CD4-positive, alpha-beta T cell (primary cell): ENCODE measurements at regions of chr14 and their contacts with region 1.

Region 1: GRCh38 chr14:100078991-100079725 is 13.9 kb downstream of the EVL start:
- DNase-seq: peak; percentile 73 to 94 (median 83)
- ATAC-seq: peak; percentile 69
- H3K4me3 ChIP-seq: peak overlapping the region; percentile 29
- H3K4me3 Mint-ChIP-seq: peak overlapping the region; percentile 88
- H3K27ac ChIP-seq: peak overlapping the region; percentile 53 to 96
- H3K27ac Mint-ChIP-seq: peak overlapping the region; percentile 98
- H3K4me1 ChIP-seq: peaks cover 95% of the 10 kb centered on the region
- H3K4me1 Mint-ChIP-seq: peaks cover 98% of the 10 kb centered on the region
- H3K27me3 ChIP-seq: no peaks in the 10 kb centered on the region
- H3K27me3 Mint-ChIP-seq: no peaks in the 10 kb centered on the region
- CTCF ChIP-seq: peak; percentile 28

Region 2: GRCh38 chr14:99009871-99010270 is 1069.3 kb before region 1 on chr14:
- CTCF ChIA-PET with region 1: no interaction called
- POLR2A ChIA-PET with region 1: no interaction called
- intact Hi-C with region 1: no loop called
- DNase-seq: peak in 10 of 14 experiments; percentile 2 to 43 (median 15)
- ATAC-seq: peak; percentile 90
- H3K4me3 ChIP-seq: no peak overlapping the region
- H3K4me3 Mint-ChIP-seq: peak overlapping the region; percentile 54
- H3K27ac ChIP-seq: peak overlapping the region in 1 of 2 donors; percentile 17
- H3K27ac Mint-ChIP-seq: peak overlapping the region; percentile 66
- H3K4me1 ChIP-seq: peaks cover 8% of the 10 kb centered on the region
- H3K4me1 Mint-ChIP-seq: peaks cover 9% of the 10 kb centered on the region
- H3K27me3 ChIP-seq: no peaks in the 10 kb centered on the region
- H3K27me3 Mint-ChIP-seq: no peaks in the 10 kb centered on the region
- CTCF ChIP-seq: no peak

Region 3: DNA sequence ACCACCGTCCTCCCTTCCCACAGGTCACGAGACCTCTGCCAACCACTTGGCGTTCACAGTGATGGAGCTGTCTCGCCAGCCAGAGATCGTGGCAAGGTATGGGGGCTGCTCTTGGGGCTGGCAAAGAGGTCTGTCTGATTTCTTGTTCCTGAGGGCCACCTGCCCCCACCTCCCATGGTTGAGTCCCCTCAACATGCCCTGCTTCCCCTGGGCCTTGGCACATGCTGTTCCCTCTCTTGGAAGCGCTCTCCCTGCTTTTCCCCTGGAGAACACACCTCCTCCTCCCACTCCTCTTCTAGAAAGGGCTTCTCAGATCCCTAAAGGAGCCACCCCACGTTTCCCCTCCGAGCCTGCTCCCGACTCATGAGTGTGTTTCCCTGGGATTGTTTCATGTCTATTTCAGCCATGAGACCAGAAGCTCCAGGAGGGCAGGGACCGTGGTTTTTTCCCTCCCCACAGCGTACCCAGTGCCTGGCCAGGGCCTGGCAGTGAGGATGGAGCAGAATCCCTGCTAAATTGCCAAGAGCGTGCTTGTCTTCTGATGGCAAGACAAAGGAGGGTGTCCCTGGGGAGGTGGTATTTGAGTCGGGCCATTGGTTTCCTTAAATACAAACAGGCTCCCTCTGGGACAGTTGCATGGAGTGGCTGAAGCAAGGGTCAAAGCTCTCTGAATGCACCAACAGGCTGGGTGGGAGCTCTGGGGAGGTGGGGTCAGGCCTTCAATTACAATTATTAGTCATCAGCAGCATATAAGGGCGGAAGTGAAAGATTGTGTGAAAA is 360.9 kb before region 1 on chr14:
- CTCF ChIA-PET with region 1: no interaction called
- POLR2A ChIA-PET with region 1: no interaction called
- intact Hi-C with region 1: no loop called
- DNase-seq: peak in 1 of 14 experiments; percentile 10
- ATAC-seq: no peak
- H3K4me3 ChIP-seq: no peak overlapping the region
- H3K4me3 Mint-ChIP-seq: no peak overlapping the region
- H3K27ac ChIP-seq: no peak overlapping the region
- H3K27ac Mint-ChIP-seq: no peak overlapping the region
- H3K4me1 ChIP-seq: no peaks in the 10 kb centered on the region
- H3K4me1 Mint-ChIP-seq: no peaks in the 10 kb centered on the region
- H3K27me3 ChIP-seq: peaks cover 0 to 3% of the 10 kb centered on the region in 2 experiments
- H3K27me3 Mint-ChIP-seq: peaks cover 10% of the 10 kb centered on the region
- CTCF ChIP-seq: no peak

Region 4: DNA sequence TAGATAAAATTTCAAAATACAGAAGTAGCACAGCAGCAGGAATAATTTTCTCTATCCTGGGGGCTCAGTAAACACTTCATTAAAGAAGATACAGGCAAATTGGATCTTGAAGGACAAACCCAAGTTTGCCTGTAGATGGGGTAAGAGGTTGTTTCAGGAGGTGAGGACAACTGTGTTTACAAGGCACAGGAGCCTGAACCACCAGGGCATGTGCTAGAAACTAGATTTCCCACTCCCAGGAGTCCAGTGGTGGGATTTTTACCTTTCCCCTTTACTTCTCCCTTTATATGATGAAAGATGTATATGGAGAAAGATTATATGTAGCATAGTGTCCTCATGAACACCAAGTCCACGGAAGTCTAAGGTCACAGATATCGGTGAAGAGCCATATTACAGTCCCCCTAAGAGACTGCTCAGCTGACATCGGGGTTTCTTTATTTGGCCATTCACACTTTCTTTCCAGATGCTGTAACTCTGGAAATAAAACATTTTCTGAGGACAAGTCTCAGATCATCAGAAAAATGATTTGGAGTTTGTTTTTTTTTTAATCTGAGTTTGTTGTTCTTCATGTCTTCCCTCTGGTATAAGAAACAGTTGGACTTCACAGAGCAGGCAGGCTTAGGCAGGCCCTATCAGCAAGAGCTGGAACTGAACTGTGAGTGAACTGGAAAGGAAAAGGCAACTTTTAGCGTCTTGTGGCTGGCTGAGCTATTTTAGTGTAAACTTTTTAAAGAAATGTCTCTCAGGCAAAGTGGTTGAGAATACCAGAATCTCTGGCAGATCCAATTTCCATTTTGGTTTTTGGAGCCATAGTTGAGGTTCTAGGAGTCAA is 22.0 kb before region 1 on chr14:
- CTCF ChIA-PET with region 1: interaction called, 1,090 read pairs
- POLR2A ChIA-PET with region 1: interaction called, 1,638 read pairs
- intact Hi-C with region 1: loop called in 1 of 2 experiments (anchors 2 kb)
- DNase-seq: peak in 4 of 14 experiments; percentile 48 to 85 (median 78)
- ATAC-seq: peak; percentile 80
- H3K4me3 ChIP-seq: no peak overlapping the region
- H3K4me3 Mint-ChIP-seq: peak overlapping the region; percentile 8
- H3K27ac ChIP-seq: peak overlapping the region in 1 of 2 donors; percentile 39
- H3K27ac Mint-ChIP-seq: peak overlapping the region; percentile 78
- H3K4me1 ChIP-seq: peaks cover 48% of the 10 kb centered on the region
- H3K4me1 Mint-ChIP-seq: peaks cover 51% of the 10 kb centered on the region
- H3K27me3 ChIP-seq: no peaks in the 10 kb centered on the region
- H3K27me3 Mint-ChIP-seq: no peaks in the 10 kb centered on the region
- CTCF ChIP-seq: peak; percentile 81

Region 5: GRCh38 chr14:100062590-100062989 is 16.6 kb before region 1 on chr14:
- CTCF ChIA-PET with region 1: interaction called, 1,090 read pairs
- POLR2A ChIA-PET with region 1: interaction called, 1,638 read pairs
- intact Hi-C with region 1: loop called (anchors 1 to 2 kb)
- DNase-seq: peak in 2 of 14 experiments; percentile 37 to 75
- ATAC-seq: no peak
- H3K4me3 ChIP-seq: peak overlapping the region; percentile 40
- H3K4me3 Mint-ChIP-seq: peak overlapping the region; percentile 95
- H3K27ac ChIP-seq: peak overlapping the region; percentile 82 to 96
- H3K27ac Mint-ChIP-seq: peak overlapping the region; percentile 98
- H3K4me1 ChIP-seq: peaks cover 64% of the 10 kb centered on the region
- H3K4me1 Mint-ChIP-seq: peaks cover 86% of the 10 kb centered on the region
- H3K27me3 ChIP-seq: no peaks in the 10 kb centered on the region
- H3K27me3 Mint-ChIP-seq: no peaks in the 10 kb centered on the region
- CTCF ChIP-seq: no peak

Region 6: GRCh38 chr14:100096570-100096971 is 17.4 kb after region 1 on chr14:
- CTCF ChIA-PET with region 1: interaction called, 1,090 read pairs
- POLR2A ChIA-PET with region 1: interaction called, 1,638 read pairs
- intact Hi-C with region 1: loop called in 1 of 2 experiments (anchors 1 kb)
- DNase-seq: no peak
- ATAC-seq: no peak
- H3K4me3 ChIP-seq: no peak overlapping the region
- H3K4me3 Mint-ChIP-seq: peak overlapping the region; percentile 56
- H3K27ac ChIP-seq: peak overlapping the region; percentile 28 to 43
- H3K27ac Mint-ChIP-seq: peak overlapping the region; percentile 98
- H3K4me1 ChIP-seq: peaks cover 96% of the 10 kb centered on the region
- H3K4me1 Mint-ChIP-seq: peaks cover 98% of the 10 kb centered on the region
- H3K27me3 ChIP-seq: no peaks in the 10 kb centered on the region
- H3K27me3 Mint-ChIP-seq: no peaks in the 10 kb centered on the region
- CTCF ChIP-seq: no peak

Region 7: GRCh38 chr14:100108042-100108825 is 29.1 kb after region 1 on chr14:
- CTCF ChIA-PET with region 1: interaction called, 1,090 read pairs
- POLR2A ChIA-PET with region 1: interaction called, 1,638 read pairs
- intact Hi-C with region 1: no loop called
- DNase-seq: peak; percentile 80 to 92 (median 86)
- ATAC-seq: peak; percentile 45
- H3K4me3 ChIP-seq: no peak overlapping the region
- H3K4me3 Mint-ChIP-seq: peak overlapping the region; percentile 69
- H3K27ac ChIP-seq: peak overlapping the region; percentile 49 to 85
- H3K27ac Mint-ChIP-seq: peak overlapping the region; percentile 98
- H3K4me1 ChIP-seq: peaks cover 87% of the 10 kb centered on the region
- H3K4me1 Mint-ChIP-seq: peaks cover 80% of the 10 kb centered on the region
- H3K27me3 ChIP-seq: no peaks in the 10 kb centered on the region
- H3K27me3 Mint-ChIP-seq: no peaks in the 10 kb centered on the region
- CTCF ChIP-seq: peak; percentile 93

Region 8: DNA sequence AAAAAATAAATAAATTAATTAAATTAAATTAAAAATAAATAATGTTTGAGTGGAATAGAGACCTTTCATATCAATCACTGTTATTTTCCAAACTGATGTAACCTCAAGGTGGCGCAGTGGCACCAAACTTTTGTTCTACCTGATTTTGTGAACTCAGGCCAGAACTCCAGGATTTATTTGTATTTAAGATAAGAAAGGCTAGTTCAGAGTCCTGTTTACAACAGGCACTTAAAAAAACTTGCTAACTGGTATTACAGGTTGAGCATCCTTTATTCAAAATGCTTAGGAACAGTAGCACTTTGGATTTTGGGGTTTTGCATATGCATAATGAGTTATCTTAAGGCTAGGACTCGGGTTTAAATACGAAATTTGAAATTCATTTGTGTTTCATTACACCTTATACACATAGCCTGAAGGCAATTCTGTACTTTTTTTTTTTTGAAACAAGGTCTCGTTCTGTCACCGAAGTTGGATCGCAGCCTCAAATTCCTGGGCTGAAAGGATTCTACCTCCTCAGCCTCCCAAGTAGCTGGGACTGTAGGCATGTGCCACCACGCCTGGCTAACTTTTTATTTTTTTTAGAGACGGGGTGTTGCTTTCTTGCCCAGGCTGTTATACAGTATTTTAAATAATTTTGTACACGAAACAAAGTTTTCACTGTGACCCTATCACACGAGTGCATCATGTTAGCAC is 192.2 kb after region 1 on chr14:
- CTCF ChIA-PET with region 1: no interaction called
- POLR2A ChIA-PET with region 1: no interaction called
- intact Hi-C with region 1: no loop called
- DNase-seq: peak in 8 of 14 experiments; percentile 9 to 56 (median 30)
- ATAC-seq: no peak
- H3K4me3 ChIP-seq: no peak overlapping the region
- H3K4me3 Mint-ChIP-seq: no peak overlapping the region
- H3K27ac ChIP-seq: no peak overlapping the region
- H3K27ac Mint-ChIP-seq: peak overlapping the region; percentile 39
- H3K4me1 ChIP-seq: peaks cover 30% of the 10 kb centered on the region
- H3K4me1 Mint-ChIP-seq: peaks cover 75% of the 10 kb centered on the region
- H3K27me3 ChIP-seq: no peaks in the 10 kb centered on the region
- H3K27me3 Mint-ChIP-seq: no peaks in the 10 kb centered on the region
- CTCF ChIP-seq: peak; percentile 29